ENCODE measurements at regions of chr20 and their contacts with region 1.

Region 1: GRCh38 chr20:23606652-23607049 is 934 bp upstream of the CST9 start:
- DNase-seq: peak; percentile 11 to 67 (median 45)
- ATAC-seq: peak; percentile 70
- H3K4me3 ChIP-seq: no peak overlapping the region
- H3K4me3 Mint-ChIP-seq: no peak overlapping the region
- H3K27ac ChIP-seq: no peak overlapping the region
- H3K27ac Mint-ChIP-seq: no peak overlapping the region
- H3K4me1 ChIP-seq: peaks cover 2% of the 10 kb centered on the region
- H3K4me1 Mint-ChIP-seq: no peaks in the 10 kb centered on the region
- H3K27me3 ChIP-seq: no peaks in the 10 kb centered on the region
- H3K27me3 Mint-ChIP-seq: peaks cover 5% of the 10 kb centered on the region
- CTCF ChIP-seq: peak; percentile 72

Region 2: DNA sequence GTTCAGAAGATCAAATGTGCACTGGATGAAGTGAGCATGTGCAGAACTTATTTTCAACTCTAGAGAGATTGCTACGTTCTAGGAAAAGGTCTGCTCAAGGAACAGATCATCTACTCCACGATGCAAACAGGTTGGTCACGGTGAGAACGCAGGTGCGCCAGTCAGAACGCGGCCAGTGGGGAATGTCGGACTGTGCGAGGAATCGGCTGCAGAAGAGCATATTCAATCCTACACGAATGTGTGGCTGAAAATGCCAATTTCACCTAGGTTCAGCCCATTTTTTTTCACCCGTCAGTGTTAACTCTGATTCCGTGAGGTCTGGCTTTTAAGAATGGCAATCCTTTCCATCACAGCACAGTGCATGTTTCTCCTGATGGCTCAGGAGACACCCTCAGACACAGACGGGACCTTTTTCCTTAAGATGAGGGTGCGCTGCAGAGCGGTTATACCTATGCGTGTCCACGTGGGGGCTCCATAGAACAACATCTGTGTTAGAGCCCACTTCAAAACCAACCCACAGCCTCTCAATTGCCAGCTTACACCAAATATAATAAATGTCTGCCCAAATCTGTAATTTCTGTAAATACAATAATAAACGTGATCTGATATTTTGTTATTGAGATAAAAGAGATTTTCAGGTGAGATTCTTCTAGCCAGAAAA is 1272.6 kb before region 1 on chr20:
- CTCF ChIA-PET with region 1: no interaction called
- POLR2A ChIA-PET with region 1: no interaction called
- intact Hi-C with region 1: loop called (anchors 10 kb)
- DNase-seq: peak in 6 of 14 experiments; percentile 5 to 51 (median 20)
- ATAC-seq: peak; percentile 48
- H3K4me3 ChIP-seq: no peak overlapping the region
- H3K4me3 Mint-ChIP-seq: no peak overlapping the region
- H3K27ac ChIP-seq: no peak overlapping the region
- H3K27ac Mint-ChIP-seq: no peak overlapping the region
- H3K4me1 ChIP-seq: no peaks in the 10 kb centered on the region
- H3K4me1 Mint-ChIP-seq: no peaks in the 10 kb centered on the region
- H3K27me3 ChIP-seq: no peaks in the 10 kb centered on the region
- H3K27me3 Mint-ChIP-seq: peaks cover 28% of the 10 kb centered on the region
- CTCF ChIP-seq: peak; percentile 43

Region 3: GRCh38 chr20:22691369-22692118 is 915.1 kb before region 1 on chr20:
- CTCF ChIA-PET with region 1: no interaction called
- POLR2A ChIA-PET with region 1: no interaction called
- intact Hi-C with region 1: loop called in 1 of 2 experiments (anchors 5 kb)
- DNase-seq: peak; percentile 3 to 66 (median 11)
- ATAC-seq: peak; percentile 37
- H3K4me3 ChIP-seq: no peak overlapping the region
- H3K4me3 Mint-ChIP-seq: no peak overlapping the region
- H3K27ac ChIP-seq: no peak overlapping the region
- H3K27ac Mint-ChIP-seq: no peak overlapping the region
- H3K4me1 ChIP-seq: peaks cover 5% of the 10 kb centered on the region
- H3K4me1 Mint-ChIP-seq: no peaks in the 10 kb centered on the region
- H3K27me3 ChIP-seq: peaks cover 0 to 4% of the 10 kb centered on the region in 2 experiments
- H3K27me3 Mint-ChIP-seq: no peaks in the 10 kb centered on the region
- CTCF ChIP-seq: peak; percentile 59

Region 4: DNA sequence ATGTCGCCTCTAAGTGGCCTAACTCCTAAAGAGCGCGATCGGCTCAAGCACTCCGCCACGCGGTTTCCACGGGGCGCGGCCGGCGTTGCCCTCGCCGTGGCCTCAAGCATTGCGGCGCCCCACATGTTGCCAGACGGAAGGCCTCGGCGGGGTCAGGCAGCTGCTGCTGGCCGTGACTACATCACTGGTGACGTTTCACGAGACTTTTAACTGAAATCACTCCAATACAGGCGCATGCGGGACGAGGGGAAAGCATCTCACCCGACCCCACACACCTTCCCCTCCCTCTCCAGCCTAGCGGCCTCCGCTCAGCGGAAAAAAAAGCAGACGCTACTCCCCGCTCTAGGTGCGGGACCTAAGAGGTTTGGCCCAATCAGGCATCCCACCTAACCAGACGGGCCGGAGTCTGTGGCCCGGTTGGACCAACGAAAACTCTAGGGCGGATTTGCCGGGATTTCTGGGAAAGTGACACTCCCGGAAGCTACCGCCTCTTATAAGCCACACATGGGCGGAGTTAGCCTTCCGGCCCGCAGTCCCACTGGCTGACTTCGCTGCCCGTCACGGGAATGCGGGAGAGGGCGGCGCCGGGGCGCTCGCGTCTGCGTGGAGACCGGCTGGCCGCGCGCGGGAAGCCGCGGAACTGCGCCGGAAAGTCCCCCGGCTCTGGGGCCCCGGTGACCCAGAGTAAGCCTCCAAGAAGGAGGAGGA is 256.3 kb before region 1 on chr20 and contains the start of gene NXT1:
- CTCF ChIA-PET with region 1: no interaction called
- POLR2A ChIA-PET with region 1: no interaction called
- intact Hi-C with region 1: loop called (anchors 2 to 5 kb)
- DNase-seq: peak; percentile 90 to 98 (median 94)
- ATAC-seq: peak; percentile 81
- H3K4me3 ChIP-seq: peak within 1 kb of the TSS; percentile 77
- H3K4me3 Mint-ChIP-seq: peak within 1 kb of the TSS; percentile 98
- H3K27ac ChIP-seq: peak within 1 kb of the TSS; percentile 99 to 100
- H3K27ac Mint-ChIP-seq: peak within 1 kb of the TSS; percentile 99
- H3K4me1 ChIP-seq: peaks cover 30% of the 10 kb centered on the region
- H3K4me1 Mint-ChIP-seq: peaks cover 30% of the 10 kb centered on the region
- H3K27me3 ChIP-seq: no peaks in the 10 kb centered on the region
- H3K27me3 Mint-ChIP-seq: no peaks in the 10 kb centered on the region
- CTCF ChIP-seq: no peak
- total RNA-seq, gene NXT1: 55.4 to 57.1 TPM

Region 5: GRCh38 chr20:23441850-23442313 is 164.8 kb before region 1 on chr20:
- CTCF ChIA-PET with region 1: no interaction called
- POLR2A ChIA-PET with region 1: no interaction called
- intact Hi-C with region 1: loop called (anchors 1 to 2 kb)
- DNase-seq: peak; percentile 17 to 74 (median 40)
- ATAC-seq: peak; percentile 51
- H3K4me3 ChIP-seq: no peak overlapping the region
- H3K4me3 Mint-ChIP-seq: no peak overlapping the region
- H3K27ac ChIP-seq: no peak overlapping the region
- H3K27ac Mint-ChIP-seq: no peak overlapping the region
- H3K4me1 ChIP-seq: no peaks in the 10 kb centered on the region
- H3K4me1 Mint-ChIP-seq: no peaks in the 10 kb centered on the region
- H3K27me3 ChIP-seq: no peaks in the 10 kb centered on the region
- H3K27me3 Mint-ChIP-seq: no peaks in the 10 kb centered on the region
- CTCF ChIP-seq: peak; percentile 78

Measured in CD4-positive, alpha-beta T cell (primary cell).